ENCODE measurements at regions of chr1 and their contacts with region 1.

Region 1: GRCh38 chr1:10965546-10966226 is 46.8 kb upstream of the TARDBP start:
- DNase-seq: no peak
- H3K4me3 ChIP-seq: no peak overlapping the region
- H3K27ac ChIP-seq: no peak overlapping the region
- H3K27me3 ChIP-seq: peaks cover 22% of the 10 kb centered on the region
- CTCF ChIP-seq: no peak

Region 2: DNA sequence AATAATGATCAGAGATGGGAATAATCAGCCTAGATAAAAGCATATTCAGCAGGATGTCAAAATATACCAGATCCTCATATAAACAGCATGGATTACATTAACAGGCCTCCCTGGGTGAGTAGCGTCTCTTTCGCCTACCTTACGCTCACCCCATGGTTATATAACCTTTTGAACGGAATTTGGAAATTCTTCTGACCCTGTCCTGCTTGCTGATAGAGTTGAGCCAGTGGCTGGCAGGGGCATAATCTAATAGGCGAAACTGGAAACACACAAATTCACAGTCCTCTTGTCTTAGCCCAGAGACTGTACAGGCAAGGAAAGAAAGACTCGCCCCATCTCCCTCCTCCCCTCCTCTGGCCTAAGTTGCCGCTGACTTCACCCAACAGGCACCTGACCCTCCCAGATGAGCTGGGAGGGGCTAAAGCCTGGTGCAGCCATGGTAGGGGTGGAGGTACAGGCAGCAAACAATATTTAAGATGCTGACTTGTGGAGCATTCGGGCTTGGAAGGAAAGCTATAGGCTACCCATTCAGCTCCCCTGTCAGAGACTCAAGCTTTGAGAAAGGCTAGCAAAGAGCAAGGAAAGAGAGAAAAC is 223.3 kb after region 1 on chr1 and contains the start of gene ANGPTL7:
- CTCF ChIA-PET with region 1: interaction called, 10 read pairs
- POLR2A ChIA-PET with region 1: no interaction called
- DNase-seq: no peak
- H3K4me3 ChIP-seq: no peak within 1 kb of the TSS
- H3K27ac ChIP-seq: no peak within 1 kb of the TSS
- H3K27me3 ChIP-seq: no peaks in the 10 kb centered on the region
- CTCF ChIP-seq: no peak
- polyA plus RNA-seq, gene ANGPTL7: not detected in 2 replicates

Measured in AG04450 (cell line).